BJ (cell line): ENCODE measurements at regions of chr3 and their contacts with region 1.

Region 1: GRCh38 chr3:87082796-87083440 is 92.0 kb upstream of the VGLL3 start:
- DNase-seq: no peak
- H3K4me3 ChIP-seq: no peak overlapping the region
- H3K27me3 ChIP-seq: no peaks in the 10 kb centered on the region
- CTCF ChIP-seq: peak; percentile 72

Region 2: DNA sequence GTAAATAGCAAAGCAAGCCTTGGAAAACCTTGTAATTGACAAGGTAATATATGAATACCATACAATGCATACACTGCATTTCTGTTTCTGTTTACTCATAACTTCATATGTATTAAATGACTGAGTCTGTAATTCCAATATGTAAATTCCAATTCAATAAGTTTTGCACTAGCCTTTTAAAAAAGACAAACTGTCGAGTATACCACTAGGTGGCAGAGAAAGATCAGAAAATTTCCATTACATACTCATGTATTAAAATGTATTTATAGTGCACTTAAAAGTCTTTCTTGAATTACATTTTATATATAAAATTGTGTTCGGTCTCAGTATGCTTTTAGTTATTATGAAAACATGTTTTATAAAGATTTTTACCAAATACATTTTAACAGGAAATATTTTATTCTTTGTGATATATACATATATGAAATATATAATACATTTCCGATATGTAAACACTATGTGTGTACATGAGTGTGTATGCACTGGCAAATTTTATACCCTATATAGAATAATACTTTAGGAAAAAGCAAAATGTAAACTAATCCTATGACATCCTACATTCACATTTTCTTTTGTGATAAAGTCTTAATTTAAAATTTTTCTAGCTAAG is 308.7 kb before region 1 on chr3:
- CTCF ChIA-PET with region 1: interaction called, 62 read pairs
- POLR2A ChIA-PET with region 1: no interaction called
- DNase-seq: no peak
- H3K4me3 ChIP-seq: no peak overlapping the region
- H3K27me3 ChIP-seq: no peaks in the 10 kb centered on the region
- CTCF ChIP-seq: peak; percentile 42; the same call in 1 of the 2 replicates

Region 3: GRCh38 chr3:86785386-86785785 is 297.5 kb before region 1 on chr3:
- CTCF ChIA-PET with region 1: interaction called, 25 read pairs
- POLR2A ChIA-PET with region 1: no interaction called
- DNase-seq: no peak
- H3K4me3 ChIP-seq: no peak overlapping the region
- H3K27me3 ChIP-seq: no peaks in the 10 kb centered on the region
- CTCF ChIP-seq: peak; percentile 54

Region 4: DNA sequence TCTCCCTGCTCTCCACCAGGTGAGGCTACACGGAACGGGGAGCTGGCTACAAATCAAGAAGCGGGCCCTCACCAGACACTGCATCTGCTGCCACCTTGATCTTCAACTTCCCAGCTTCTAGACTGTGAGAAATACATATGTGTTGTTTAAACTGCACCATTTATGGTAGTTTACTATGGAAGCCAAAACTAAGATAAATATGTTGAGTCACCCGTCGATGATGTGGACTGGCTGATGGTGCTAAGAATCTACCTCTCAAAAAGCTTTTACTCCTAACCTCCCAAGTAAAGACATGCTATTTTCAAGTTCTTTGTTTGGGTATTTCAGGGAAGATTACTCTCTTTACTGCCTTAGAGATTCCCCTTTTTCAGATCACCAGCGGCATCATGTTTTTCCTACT is 202.9 kb before region 1 on chr3:
- CTCF ChIA-PET with region 1: no interaction called
- POLR2A ChIA-PET with region 1: no interaction called
- DNase-seq: no peak
- H3K4me3 ChIP-seq: no peak overlapping the region
- H3K27me3 ChIP-seq: no peaks in the 10 kb centered on the region
- CTCF ChIP-seq: no peak

Region 5: GRCh38 chr3:86967062-86967461 is 115.9 kb before region 1 on chr3:
- CTCF ChIA-PET with region 1: interaction called, 10 read pairs
- POLR2A ChIA-PET with region 1: no interaction called
- DNase-seq: no peak
- H3K4me3 ChIP-seq: no peak overlapping the region
- H3K27me3 ChIP-seq: no peaks in the 10 kb centered on the region
- CTCF ChIP-seq: no peak

Region 6: GRCh38 chr3:86978111-86978558 is 104.8 kb before region 1 on chr3:
- CTCF ChIA-PET with region 1: interaction called, 10 read pairs
- POLR2A ChIA-PET with region 1: no interaction called
- DNase-seq: peak; percentile 84
- H3K4me3 ChIP-seq: peak overlapping the region; percentile 9
- H3K27me3 ChIP-seq: no peaks in the 10 kb centered on the region
- CTCF ChIP-seq: no peak

Region 7: DNA sequence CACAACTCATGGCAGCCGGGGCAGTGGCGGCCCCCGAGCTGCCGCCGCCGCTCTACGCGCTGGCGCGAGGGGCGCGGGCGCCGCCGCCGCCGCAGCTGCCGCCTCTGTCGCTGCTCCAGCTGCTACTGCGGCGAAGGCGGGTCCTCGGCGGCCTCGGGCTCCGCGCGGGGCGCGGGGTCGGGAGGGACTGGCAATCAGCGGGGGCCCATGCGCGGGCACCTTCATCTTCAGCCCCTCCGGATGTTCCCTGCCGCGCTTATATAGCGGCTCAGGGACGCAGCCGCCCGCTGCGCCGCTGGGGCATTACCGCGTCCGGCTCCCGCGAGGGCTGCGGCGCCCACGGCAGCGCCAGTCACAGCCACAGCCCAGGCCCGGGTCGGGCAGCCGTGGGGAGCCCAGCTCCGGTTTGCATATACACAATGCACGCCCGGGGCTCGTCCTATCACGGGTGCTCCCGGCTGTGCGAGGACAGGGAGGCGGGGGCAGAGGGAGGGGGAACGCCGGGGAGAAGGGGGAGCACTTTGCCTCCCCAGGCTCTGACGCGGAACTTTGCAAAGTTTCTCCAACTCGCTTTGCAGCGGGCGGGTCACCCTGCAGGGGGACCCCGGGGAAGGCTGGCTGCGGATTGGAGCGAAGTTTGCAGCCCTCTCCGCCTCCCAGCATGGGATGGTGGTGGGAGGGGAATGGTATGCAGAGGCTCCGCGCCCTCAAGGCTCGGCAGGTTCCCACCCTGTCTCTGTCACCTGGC is 92.0 kb before region 1 on chr3 and contains the start of gene VGLL3:
- CTCF ChIA-PET with region 1: interaction called, 19 read pairs
- POLR2A ChIA-PET with region 1: no interaction called
- DNase-seq: peak; percentile 43
- H3K4me3 ChIP-seq: peak within 1 kb of the TSS; percentile 88
- H3K27me3 ChIP-seq: no peaks in the 10 kb centered on the region
- CTCF ChIP-seq: peak; percentile 58
- polyA plus RNA-seq, gene VGLL3: 59.3 and 98.8 TPM in 2 replicates

Region 8: GRCh38 chr3:87006844-87007439 is 76.0 kb before region 1 on chr3:
- CTCF ChIA-PET with region 1: interaction called, 12 read pairs
- POLR2A ChIA-PET with region 1: no interaction called
- DNase-seq: no peak
- H3K4me3 ChIP-seq: no peak overlapping the region
- H3K27me3 ChIP-seq: no peaks in the 10 kb centered on the region
- CTCF ChIP-seq: peak; percentile 67

Region 9: DNA sequence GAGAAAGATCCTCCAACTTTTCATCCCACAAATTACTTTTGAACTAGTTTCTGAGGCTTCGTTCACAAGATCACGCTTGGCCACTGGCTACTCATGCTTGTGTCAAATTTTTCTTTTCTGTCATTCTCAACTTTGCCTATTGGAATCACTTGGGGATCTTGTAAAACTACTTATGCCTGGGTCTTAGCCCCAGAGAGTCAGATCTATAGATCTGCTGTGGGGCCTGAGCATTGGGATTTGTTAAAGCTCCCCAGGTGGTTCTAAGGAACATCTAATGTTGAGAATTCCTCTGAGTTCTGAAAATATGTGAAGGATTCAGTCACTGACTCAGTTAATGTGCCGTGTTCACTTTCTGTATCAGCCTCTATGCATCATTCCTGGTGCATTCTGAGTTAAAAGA is 20.2 kb before region 1 on chr3:
- CTCF ChIA-PET with region 1: no interaction called
- POLR2A ChIA-PET with region 1: no interaction called
- DNase-seq: no peak
- H3K4me3 ChIP-seq: no peak overlapping the region
- H3K27me3 ChIP-seq: no peaks in the 10 kb centered on the region
- CTCF ChIP-seq: no peak